ENCODE measurements at regions of chr1 and their contacts with region 1.

Region 1: GRCh38 chr1:205591522-205592351 is 40.1 kb downstream of the ELK4 start:
- DNase-seq: peak; percentile 83
- CTCF ChIP-seq: peak; percentile 98

Region 2: DNA sequence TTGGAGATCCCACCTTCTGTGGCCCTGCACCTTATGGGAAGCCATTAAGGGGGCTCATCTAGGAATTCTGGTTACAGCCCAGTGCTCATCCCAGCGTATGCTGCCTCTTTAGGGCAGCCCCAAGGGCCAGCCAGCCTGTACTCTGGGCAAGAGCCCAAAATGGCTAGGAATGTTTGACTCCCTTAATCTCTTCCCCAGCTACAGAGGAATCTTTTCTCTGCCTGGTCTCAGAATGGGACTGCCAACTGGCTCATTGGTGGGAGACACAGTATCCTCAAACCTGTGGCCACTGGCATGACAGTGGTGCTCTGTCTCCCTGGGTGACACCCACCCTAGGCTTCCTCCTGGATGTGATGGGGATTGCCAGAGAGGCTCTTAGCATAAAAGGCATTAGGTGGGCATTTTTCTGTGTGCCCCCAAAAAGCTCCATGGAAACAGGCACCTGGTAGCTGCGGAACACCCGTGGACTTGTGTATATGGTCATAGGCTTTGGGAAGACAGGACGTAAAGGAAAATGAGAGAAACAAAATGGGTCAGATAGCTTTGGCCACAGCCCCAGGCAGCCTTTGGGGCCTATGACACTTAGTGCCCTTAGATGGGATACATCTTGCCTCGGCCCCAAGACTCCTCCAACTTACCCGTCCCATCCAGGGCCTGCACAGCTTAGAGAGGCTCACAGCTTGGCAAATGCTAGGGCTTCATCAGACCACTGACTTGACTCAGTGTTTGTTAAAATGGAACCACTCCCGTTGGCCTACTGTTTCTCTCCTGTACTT is 514.4 kb before region 1 on chr1:
- CTCF ChIA-PET with region 1: no interaction called
- POLR2A ChIA-PET with region 1: no interaction called
- DNase-seq: no peak
- CTCF ChIP-seq: no peak

Region 3: DNA sequence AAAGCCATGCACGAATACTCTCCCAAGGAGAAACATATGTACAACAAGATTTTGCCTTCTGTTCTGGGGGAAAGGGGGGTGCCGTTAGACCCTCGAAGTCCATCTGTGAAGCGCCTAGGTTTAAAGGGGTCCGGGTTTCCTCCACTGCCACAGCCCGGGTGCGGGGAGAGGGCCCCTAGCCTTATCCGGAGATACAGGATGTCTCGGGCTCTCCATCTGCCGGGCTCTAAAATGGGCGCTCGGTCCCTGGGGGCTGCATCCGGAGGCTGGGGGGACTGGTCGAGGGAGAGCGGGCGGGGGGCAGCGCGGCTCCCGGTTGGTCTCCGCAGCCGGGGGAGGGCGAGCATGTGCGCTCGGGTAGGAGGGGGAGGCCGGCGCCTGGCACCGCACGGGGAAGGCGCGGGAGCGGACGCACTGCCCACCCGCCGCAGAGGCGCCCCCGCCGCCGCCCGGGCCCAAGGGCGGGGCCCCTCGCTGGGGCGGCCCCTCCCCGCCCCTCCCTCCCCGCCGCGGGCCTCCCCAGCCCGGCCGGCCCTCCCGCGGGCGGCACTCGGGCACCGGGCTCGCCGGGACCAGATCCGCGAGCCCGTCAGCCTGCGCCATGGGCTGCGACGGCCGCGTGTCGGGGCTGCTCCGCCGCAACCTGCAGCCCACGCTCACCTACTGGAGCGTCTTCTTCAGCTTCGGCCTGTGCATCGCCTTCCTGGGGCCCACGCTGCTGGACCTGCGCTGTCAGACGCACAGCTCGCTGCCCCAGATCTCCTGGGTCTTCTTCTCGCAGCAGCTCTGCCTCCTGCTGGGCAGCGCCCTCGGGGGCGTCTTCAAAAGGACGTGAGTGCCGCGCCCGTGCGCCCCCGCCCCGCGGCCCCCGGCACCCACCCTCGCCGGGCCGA is 23.0 kb before region 1 on chr1:
- CTCF ChIA-PET with region 1: interaction called, 19 read pairs
- POLR2A ChIA-PET with region 1: no interaction called
- DNase-seq: no peak
- CTCF ChIP-seq: no peak

Region 4: GRCh38 chr1:205616563-205617293 is 25.0 kb after region 1 on chr1:
- CTCF ChIA-PET with region 1: interaction called, 19 read pairs
- POLR2A ChIA-PET with region 1: no interaction called
- DNase-seq: peak; percentile 36
- CTCF ChIP-seq: no peak

Region 5: DNA sequence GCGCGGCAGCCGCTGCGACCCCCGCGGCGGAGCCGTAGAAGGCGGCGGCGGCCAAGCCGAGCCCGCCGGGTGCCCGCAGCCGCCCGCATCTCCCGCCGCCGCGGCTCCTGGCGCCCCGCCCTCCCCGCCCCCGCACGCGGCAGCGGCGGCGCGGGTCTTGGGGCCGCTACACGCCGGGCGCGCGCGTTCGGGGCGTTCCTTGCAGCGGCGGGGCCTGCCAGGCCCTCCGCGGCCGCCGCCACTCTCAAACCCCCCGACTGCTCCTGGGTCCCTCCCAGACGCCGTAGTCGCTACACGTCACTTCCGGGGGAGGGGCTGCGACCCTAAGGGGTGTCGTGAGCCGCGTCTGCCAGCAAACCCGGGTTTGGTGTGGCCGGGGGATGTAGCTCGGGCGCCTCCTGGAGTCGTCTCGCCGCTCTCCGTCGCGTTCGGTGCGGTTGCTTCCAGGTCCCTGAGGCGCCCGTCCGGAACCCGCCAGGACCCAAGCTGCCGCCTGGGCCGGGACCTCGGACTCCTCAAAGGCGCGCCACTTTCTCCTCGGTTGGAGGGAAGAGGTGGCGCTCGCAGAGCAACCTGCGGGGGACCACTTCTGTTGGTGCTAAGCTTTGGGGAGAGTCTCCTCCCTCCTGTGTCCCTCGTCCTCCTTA is 40.1 kb after region 1 on chr1 and contains the start of gene ELK4:
- CTCF ChIA-PET with region 1: interaction called, 263 read pairs
- POLR2A ChIA-PET with region 1: interaction called, 7 read pairs
- DNase-seq: peak; percentile 97
- CTCF ChIP-seq: peak; percentile 79

Region 6: DNA sequence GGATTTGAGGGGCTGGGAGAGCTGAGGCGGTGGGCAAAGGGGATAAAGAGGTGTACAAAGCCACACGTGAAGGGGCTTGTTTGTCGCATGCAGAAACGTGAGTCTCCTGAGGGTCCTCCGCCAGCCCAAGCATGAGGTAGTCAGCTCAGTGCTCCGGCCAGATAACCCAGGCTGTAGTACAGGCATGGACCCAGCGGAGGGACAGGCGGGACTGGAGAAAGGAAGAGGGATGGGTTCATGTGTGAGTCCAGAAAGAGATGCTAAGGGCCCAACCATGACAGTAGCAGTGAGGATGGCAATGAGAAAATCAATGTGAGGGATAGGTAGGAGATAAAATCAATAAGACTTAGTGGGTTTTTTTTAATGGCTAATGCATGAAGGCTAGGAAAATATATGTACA is 53.8 kb after region 1 on chr1:
- CTCF ChIA-PET with region 1: interaction called, 24 read pairs
- POLR2A ChIA-PET with region 1: interaction called, 5 read pairs
- DNase-seq: no peak
- CTCF ChIP-seq: no peak

Region 7: DNA sequence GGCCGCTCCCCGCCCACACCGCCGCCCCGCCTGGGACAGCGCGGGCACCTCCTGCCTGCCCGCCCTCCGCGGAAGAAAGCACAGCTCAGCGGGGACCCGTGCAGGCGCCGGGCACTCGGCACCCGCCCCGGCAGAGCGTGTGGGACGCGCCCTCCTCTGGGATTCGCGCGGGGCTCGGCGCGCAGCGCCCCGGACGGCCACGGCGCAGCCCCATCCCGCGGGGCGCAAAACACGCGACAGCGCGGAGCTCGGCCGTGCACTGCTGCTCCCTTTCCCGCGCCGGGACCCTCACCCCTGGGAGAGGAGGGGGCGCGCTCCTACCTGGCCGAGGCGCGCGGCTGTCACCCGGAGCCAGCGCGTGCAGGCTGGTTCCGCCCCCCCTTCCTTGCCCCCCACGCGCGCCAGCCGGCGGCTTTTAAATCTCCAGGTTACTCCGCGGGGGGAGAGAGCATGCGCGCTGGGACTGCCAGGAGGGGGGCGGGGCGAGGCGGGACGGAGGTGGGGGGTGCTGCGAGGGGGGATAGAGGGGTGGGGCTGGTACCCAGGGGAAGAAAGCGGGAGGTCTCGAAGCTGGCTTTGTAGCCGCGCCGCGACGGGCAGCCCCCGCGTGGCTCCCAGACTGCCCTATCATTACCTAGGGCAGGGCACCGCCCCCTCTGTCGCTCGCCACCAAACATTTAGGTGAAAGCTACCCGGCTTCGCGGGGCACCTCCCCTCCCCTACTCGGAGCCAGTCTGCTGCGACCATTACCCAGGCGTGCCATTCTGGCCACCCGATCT is 88.5 kb after region 1 on chr1 and contains the start of gene SLC45A3:
- CTCF ChIA-PET with region 1: interaction called, 18 read pairs
- POLR2A ChIA-PET with region 1: no interaction called
- DNase-seq: peak; percentile 53
- CTCF ChIP-seq: no peak

Region 8: GRCh38 chr1:206050655-206051235 is 459.0 kb after region 1 on chr1:
- CTCF ChIA-PET with region 1: no interaction called
- POLR2A ChIA-PET with region 1: no interaction called
- DNase-seq: peak; percentile 63
- CTCF ChIP-seq: no peak